HAP-1 (cell line): ENCODE measurements at regions of chr10 and their contacts with region 1.

Region 1: GRCh38 chr10:104121520-104122224 is at the start of gene SFR1:
- DNase-seq: peak; percentile 96 to 99
- H3K4me3 ChIP-seq: peak within 1 kb of the TSS; percentile 82
- H3K4me1 ChIP-seq: peaks cover 13% of the 10 kb centered on the region
- H3K27me3 ChIP-seq: no peaks in the 10 kb centered on the region

Region 2: DNA sequence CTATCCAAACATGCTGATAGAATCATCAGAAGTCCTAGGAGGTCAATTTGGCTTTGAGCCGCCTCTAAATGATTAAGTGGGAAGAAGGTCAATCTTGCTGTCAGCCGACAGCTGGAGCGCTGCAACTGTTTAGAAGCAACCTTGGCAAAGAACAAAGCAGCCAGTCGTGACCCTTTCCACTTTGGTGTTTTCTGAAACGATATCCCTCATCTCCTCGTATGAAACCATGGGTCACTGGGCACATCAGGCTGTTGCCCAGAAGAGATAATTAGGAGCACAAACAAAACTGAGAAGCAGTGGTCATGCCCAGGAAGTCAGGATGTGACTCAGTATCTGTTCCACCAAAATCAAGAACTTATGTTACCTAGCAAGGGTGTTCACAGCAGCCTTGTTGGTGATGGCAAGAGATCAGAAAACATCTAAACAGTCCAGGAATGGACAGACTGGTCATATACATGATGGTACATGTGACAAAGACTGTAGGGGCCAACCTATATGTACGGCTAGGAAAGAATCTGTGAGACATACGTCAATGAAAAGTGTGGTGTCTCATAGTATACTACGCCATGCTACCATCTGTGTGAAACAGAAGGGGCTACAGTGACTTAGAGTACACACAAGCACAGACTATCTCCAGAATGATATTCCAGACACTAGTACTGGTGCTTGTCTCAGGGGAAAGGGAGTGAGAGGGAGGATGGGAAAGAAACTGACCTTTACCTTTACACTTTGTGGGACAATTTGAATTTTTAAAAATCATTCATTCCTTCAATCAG is 226.1 kb before region 1 on chr10:
- in situ Hi-C with region 1: loop called (anchors 10 kb)
- DNase-seq: no peak
- H3K4me3 ChIP-seq: no peak overlapping the region
- H3K4me1 ChIP-seq: peaks cover 11% of the 10 kb centered on the region
- H3K27me3 ChIP-seq: no peaks in the 10 kb centered on the region

Region 3: GRCh38 chr10:103966671-103967447 is 154.8 kb before region 1 on chr10 and contains the start of gene SLK:
- in situ Hi-C with region 1: loop called (anchors 10 kb)
- DNase-seq: peak; percentile 56 to 79
- H3K4me3 ChIP-seq: peak within 1 kb of the TSS; percentile 60
- H3K4me1 ChIP-seq: peaks cover 10% of the 10 kb centered on the region
- H3K27me3 ChIP-seq: no peaks in the 10 kb centered on the region

Region 4: DNA sequence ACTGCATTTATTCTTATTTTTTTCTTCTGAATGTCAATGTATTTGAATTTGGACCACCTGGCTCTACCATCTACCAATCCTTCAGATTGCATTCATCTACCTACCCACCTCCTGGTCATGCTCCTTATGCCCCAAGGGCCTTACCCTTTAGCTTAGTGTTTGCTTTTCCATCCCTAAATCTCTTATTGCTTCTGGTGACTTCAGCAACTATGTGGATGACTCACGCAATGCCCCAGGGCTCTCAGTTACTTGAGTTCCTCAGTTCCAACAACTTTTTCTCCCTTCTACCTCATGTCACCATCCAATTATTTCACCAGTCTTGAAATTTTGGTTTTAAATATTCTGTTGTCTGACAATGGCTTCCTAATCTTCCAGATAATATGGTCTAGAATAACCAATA is 350.8 kb after region 1 on chr10:
- in situ Hi-C with region 1: no loop called
- DNase-seq: no peak
- H3K4me3 ChIP-seq: no peak overlapping the region
- H3K4me1 ChIP-seq: no peaks in the 10 kb centered on the region
- H3K27me3 ChIP-seq: 0 out of 2 replicates have a peak, but pooled peaks cover 3% of the 10 kb centered on the region